Activated CD4-positive, alpha-beta T cell treated with anti-CD3 and anti-CD28 coated beads for 36 hours (primary cell): ENCODE measurements at regions of chr3 and their contacts with region 1.

Region 1: GRCh38 chr3:114152519-114153151 is 26.2 kb downstream of the DRD3 start:
- DNase-seq: peak; percentile 91
- ATAC-seq: peak; percentile 92
- H3K4me3 Mint-ChIP-seq: peak overlapping the region; percentile 15
- H3K27ac Mint-ChIP-seq: no peak overlapping the region
- H3K4me1 Mint-ChIP-seq: peaks cover 11% of the 10 kb centered on the region
- H3K27me3 Mint-ChIP-seq: no peaks in the 10 kb centered on the region

Region 2: DNA sequence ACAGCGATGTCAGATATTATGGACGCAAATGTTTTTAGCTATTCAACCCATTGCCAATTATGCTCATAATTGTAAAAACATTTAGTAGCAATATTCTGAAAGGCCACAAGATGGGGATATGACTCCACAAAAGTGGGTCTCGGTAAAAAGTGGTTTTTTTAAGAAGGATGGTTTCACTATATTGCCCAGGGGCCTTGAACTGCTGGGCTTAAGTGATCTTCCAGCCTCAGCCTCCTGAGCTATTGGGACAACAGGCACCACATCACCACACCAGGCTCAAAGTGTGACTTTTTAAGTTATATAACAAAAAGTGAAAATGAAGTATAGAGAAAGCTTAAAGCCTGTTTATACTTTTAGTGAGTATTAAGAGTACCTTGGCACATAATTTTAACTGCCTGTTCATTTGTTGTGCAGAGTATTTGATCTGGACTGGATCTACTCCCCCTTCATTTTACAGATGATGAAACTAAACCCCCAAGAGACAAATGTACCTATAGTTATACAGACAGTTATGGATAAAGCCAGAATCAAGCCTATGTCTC is 416.0 kb before region 1 on chr3:
- CTCF ChIA-PET with region 1: no interaction called
- POLR2A ChIA-PET with region 1: no interaction called
- intact Hi-C with region 1: loop called in 1 of 2 experiments (anchors 10 kb)
- DNase-seq: peak; percentile 25
- ATAC-seq: peak; percentile 86
- H3K4me3 Mint-ChIP-seq: no peak overlapping the region
- H3K27ac Mint-ChIP-seq: peak overlapping the region; percentile 74
- H3K4me1 Mint-ChIP-seq: peaks cover 67% of the 10 kb centered on the region
- H3K27me3 Mint-ChIP-seq: no peaks in the 10 kb centered on the region

Region 3: DNA sequence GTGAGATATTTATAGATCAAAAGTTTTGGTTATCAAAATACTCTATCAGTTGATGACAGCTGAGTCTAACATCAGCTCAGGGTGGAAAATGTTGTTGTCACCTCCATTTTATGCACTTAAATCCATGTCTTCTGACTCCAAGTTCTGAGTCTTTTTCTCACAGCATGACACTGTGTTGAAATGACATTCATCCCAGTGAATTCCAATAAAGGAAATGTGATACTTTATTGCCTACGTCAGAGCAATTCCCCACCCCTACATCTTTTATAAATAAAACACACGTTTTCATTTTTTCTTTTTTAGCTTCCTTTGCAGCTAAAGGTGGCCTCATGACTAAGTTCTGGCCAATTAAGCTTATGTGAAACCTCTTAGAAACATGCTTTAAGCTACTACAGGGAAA is 15.5 kb after region 1 on chr3:
- CTCF ChIA-PET with region 1: interaction called, 12 read pairs
- POLR2A ChIA-PET with region 1: no interaction called
- intact Hi-C with region 1: no loop called
- DNase-seq: no peak
- ATAC-seq: no peak
- H3K4me3 Mint-ChIP-seq: no peak overlapping the region
- H3K27ac Mint-ChIP-seq: no peak overlapping the region
- H3K4me1 Mint-ChIP-seq: no peaks in the 10 kb centered on the region
- H3K27me3 Mint-ChIP-seq: peaks cover 3% of the 10 kb centered on the region

Region 4: DNA sequence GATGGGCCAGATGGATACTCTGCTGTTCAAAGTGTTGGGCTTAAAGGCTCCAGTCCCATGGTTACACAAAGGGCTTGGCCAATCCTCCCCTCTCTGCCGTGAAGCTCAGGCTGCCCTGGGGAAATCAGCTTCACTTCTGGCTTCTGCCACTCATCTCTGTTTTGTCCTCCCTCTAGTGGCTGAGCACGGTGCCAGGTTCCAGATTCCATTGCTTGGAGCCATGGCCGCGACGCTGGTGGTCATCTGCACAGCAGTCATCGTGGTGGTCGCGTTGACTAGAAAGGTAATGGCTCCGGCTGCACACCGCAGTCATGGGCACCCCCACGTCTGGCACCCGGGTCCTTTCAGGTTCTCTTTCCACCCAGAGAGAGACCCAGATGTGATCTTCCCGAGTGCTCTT is 146.8 kb after region 1 on chr3:
- CTCF ChIA-PET with region 1: interaction called, 3 read pairs
- POLR2A ChIA-PET with region 1: no interaction called
- intact Hi-C with region 1: loop called (anchors 2 kb)
- DNase-seq: peak; percentile 53
- ATAC-seq: peak; percentile 52
- H3K4me3 Mint-ChIP-seq: peak overlapping the region; percentile 1
- H3K27ac Mint-ChIP-seq: peak overlapping the region; percentile 17
- H3K4me1 Mint-ChIP-seq: peaks cover 4% of the 10 kb centered on the region
- H3K27me3 Mint-ChIP-seq: no peaks in the 10 kb centered on the region

Region 5: DNA sequence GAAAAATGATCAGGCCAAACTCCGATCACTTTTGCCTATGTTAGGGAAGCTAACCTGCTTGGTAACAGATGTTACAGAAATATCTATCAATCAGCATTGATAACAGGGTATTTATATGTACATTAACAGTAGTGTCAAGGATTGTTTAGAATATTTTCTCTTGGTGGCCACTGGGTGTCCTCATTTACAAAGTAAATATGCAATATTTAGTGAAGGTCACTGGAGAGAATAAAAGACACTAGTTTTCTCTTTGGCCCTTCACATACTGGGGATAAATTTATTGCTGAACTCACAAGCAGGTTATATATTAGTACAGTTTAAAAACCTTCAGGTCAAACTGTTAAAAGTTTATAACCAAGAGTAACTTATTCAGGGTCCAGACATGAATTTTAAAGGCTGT is 210.2 kb after region 1 on chr3:
- CTCF ChIA-PET with region 1: interaction called, 4 read pairs
- POLR2A ChIA-PET with region 1: no interaction called
- intact Hi-C with region 1: loop called in 1 of 2 experiments (anchors 2 kb)
- DNase-seq: no peak
- ATAC-seq: peak; percentile 49
- H3K4me3 Mint-ChIP-seq: no peak overlapping the region
- H3K27ac Mint-ChIP-seq: no peak overlapping the region
- H3K4me1 Mint-ChIP-seq: peaks cover 5% of the 10 kb centered on the region
- H3K27me3 Mint-ChIP-seq: no peaks in the 10 kb centered on the region

Region 6: GRCh38 chr3:114928989-114929640 is 776.5 kb after region 1 on chr3:
- CTCF ChIA-PET with region 1: no interaction called
- POLR2A ChIA-PET with region 1: no interaction called
- intact Hi-C with region 1: no loop called
- DNase-seq: no peak
- ATAC-seq: no peak
- H3K4me3 Mint-ChIP-seq: no peak overlapping the region
- H3K27ac Mint-ChIP-seq: no peak overlapping the region
- H3K4me1 Mint-ChIP-seq: no peaks in the 10 kb centered on the region
- H3K27me3 Mint-ChIP-seq: no peaks in the 10 kb centered on the region